Left ventricle myocardium inferior (tissue), 1 donor: ENCODE measurements at regions of chr17 and their contacts with region 1.

Region 1: GRCh38 chr17:27756512-27757371 is 43.6 kb downstream of the NOS2 start:
- DNase-seq: no peak
- H3K4me3 ChIP-seq: no peak overlapping the region
- H3K27ac ChIP-seq: no peak overlapping the region
- H3K4me1 ChIP-seq: no peaks in the 10 kb centered on the region
- H3K27me3 ChIP-seq: peaks cover 9% of the 10 kb centered on the region
- CTCF ChIP-seq: peak; percentile 92

Region 2: DNA sequence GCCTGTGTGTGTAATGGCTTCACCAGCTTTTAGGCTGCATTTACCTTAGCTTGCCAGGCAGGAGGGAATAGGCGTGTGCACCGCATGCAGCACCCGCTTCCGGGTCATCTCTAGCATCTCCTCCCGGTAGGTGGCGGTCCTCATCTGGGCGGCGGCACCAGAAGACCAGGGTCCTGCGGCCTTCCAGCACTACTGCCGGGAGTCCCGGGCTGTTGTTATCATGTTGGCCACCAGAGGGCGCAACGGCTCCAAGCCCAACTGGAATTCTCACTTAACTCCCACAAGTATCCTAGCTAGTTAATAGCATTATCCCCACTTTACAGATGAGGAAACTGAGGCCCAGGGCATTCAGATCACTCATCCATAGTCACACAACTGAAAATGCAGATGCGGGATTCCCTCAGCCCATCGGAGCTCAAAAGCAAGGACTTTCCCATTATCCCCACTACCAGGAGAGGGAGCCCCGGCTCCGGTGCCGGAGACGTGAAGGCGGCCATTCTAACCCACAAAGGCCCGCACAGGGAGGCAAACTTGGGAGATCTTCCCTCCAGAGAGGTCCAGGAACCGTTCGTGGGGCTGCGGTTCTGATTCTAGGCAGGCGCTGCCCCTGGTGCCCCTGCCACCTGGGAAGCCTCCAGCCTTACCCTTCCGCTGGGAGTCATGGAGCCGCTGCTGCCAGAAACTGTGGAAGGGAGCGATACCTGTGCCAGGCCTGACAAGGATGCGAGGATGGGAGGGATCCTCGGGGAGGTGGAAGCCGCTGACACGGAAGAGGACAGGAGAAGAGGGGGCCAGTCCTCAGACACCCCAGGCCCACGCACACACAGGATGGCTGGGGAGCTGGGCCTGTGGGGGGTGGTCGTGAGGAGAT is 101.9 kb before region 1 on chr17:
- intact Hi-C with region 1: loop called (anchors 10 kb)
- DNase-seq: peak; percentile 65
- H3K4me3 ChIP-seq: no peak overlapping the region
- H3K27ac ChIP-seq: no peak overlapping the region
- H3K4me1 ChIP-seq: peaks cover under 1% of the 10 kb centered on the region
- H3K27me3 ChIP-seq: peaks cover 5% of the 10 kb centered on the region
- CTCF ChIP-seq: peak; percentile 91